Heart left ventricle (tissue), 16 donors: ENCODE measurements at regions of chr11 and their contacts with region 1.

Region 1: DNA sequence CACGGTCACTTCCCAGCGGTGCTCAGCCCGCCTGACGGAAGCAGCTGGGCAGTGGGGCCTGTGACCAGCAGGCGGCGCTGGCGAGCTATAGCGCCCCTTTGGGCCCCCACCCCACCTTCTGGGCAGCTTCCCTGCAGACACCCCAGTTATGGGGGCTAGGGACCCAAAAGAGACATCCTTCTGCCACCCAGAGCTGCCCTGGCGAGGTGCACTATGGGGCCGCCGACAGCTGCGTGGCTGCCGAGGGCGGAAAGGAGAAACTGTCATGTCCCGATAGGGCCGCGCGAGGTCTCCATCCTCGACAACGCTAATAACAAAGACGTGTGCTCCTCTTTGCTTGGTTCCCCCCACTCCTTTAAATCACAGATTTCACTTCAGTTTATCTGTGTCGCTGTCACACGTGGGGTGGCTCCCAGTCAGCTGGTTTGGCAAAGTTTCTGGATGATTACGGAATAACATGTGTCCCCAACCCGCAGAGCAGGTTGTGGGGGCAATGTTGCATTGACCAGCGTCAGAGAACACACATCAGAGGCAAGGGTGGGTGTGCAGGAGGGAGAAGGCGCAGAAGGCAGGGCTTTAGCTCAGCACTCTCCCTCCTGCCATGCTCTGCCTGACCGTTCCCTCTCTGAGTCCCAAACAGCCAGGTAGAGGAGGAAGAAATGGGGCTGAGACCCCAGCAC is 674 bp upstream of the MYO7A start:
- DNase-seq: peak; percentile 44 to 76 (median 63)
- ATAC-seq: peak; percentile 55 to 71 (median 66)
- H3K4me3 ChIP-seq: peak overlapping the region; percentile 1 to 60 (median 45)
- H3K27ac ChIP-seq: peak overlapping the region in 3 of 12 donors; percentile 9 to 35 (median 25)
- H3K4me1 ChIP-seq: peaks cover 0 to 41% (median 26%) of the 10 kb centered on the region in 12 donors
- H3K27me3 ChIP-seq: peaks cover 0 to 9% (median 0%) of the 10 kb centered on the region in 9 donors
- CTCF ChIP-seq: peak; percentile 96 to 100 (median 99)
- POLR2A ChIP-seq: no peak

Region 2: DNA sequence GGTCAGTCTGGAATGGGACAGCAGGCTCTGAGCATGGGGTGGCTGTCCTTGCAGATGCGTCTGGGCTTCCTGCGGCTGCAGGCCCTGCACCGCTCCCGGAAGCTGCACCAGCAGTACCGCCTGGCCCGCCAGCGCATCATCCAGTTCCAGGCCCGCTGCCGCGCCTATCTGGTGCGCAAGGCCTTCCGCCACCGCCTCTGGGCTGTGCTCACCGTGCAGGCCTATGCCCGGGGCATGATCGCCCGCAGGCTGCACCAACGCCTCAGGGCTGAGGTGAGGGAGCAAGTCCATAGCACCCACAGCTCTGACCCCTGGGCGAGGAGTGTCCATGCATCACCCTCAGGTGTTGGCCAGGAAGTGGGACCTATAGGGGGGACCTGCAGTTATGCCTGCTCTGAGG is 52.3 kb after region 1 on chr11:
- intact Hi-C with region 1: loop called in 1 of 10 experiments (anchors 2 kb)
- DNase-seq: peak in 1 of 5 donors; percentile 54
- ATAC-seq: no peak
- H3K4me3 ChIP-seq: no peak overlapping the region
- H3K27ac ChIP-seq: no peak overlapping the region
- H3K4me1 ChIP-seq: peaks cover 0 to 6% (median 0%) of the 10 kb centered on the region in 12 donors
- H3K27me3 ChIP-seq: no peaks in the 10 kb centered on the region
- CTCF ChIP-seq: no peak
- POLR2A ChIP-seq: no peak

Region 3: DNA sequence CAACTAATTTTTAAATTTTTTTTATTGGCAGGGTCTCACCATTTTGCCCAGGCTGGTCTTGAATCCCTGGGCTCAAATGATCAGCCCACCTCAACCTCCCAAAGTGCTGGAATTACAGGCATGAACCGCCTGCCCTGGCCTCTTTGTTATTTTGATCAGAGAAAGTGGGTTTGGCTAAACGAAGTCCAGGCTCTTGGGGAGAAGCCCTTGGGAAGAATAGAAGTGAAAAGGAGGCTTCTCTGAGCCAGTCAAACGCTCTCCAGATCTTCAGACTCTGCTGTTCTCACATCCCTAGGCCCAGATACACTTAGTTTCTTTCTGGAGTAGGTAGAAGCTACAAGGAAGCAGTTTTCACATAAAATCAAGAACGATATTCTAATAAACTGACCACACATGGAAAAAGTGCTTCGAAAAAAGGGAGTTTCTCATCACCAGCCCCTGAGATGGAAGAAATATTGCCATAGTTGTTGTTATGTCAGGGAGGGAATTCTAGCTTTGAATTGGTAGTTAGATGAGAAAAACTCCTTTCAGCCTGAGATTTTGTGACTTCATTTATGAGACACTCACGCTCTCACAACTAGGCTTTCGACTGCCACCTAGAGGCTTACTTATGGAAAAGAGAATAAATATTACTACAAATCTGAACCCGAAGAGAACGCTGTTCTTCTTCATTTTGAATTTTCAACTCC is 420.6 kb after region 1 on chr11:
- intact Hi-C with region 1: loop called in 9 of 10 experiments (anchors 1 to 10 kb)
- DNase-seq: peak in 2 of 5 donors; percentile 23 to 26
- ATAC-seq: peak in 3 of 4 donors; percentile 30 to 66 (median 39)
- H3K4me3 ChIP-seq: no peak overlapping the region
- H3K27ac ChIP-seq: no peak overlapping the region
- H3K4me1 ChIP-seq: peaks cover 0 to 9% (median 0%) of the 10 kb centered on the region in 12 donors
- H3K27me3 ChIP-seq: no peaks in the 10 kb centered on the region
- CTCF ChIP-seq: peak; percentile 42 to 75 (median 58)
- POLR2A ChIP-seq: no peak